Aorta (tissue), 5 donors: ENCODE measurements at regions of chr1 and their contacts with region 1.

Region 1: GRCh38 chr1:47738560-47739182 is 258.5 kb downstream of the TRABD2B start:
- DNase-seq: peak; percentile 64 to 88
- ATAC-seq: peak; percentile 90
- H3K4me3 ChIP-seq: no peak overlapping the region
- H3K27ac ChIP-seq: no peak overlapping the region
- H3K4me1 ChIP-seq: no peaks in the 10 kb centered on the region
- H3K27me3 ChIP-seq: no peaks in the 10 kb centered on the region

Region 2: DNA sequence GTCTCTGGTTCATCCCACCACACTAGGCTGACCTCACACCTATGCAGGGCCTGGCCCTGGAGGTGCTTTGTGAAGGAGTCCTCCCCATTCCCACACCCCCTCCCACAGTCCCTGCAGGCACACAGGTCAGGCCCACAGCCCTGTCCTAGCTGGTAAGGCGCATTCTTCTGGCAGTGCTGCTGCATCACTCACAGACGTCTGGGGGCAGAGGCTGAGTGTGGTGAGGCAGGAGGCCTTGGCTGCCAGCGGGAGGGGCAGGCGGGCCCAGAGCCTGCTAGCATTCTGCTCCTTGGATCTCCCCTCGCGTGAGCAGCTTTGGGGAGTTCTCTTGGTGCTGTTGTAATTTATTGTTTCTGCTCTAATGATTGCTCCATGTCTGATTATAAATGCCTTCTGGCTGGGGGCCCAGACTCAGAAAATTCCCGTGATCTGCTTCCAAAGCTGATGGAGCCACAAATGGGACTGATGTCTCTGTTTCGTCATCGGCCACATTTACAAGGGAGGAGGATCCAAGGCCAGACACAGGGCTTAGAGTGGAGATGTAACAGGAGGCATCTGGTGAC is 195.7 kb after region 1 on chr1:
- intact Hi-C with region 1: loop called in 1 of 2 experiments (anchors 5 kb)
- DNase-seq: peak; percentile 77 to 90
- ATAC-seq: peak; percentile 88
- H3K4me3 ChIP-seq: no peak overlapping the region
- H3K27ac ChIP-seq: no peak overlapping the region
- H3K4me1 ChIP-seq: no peaks in the 10 kb centered on the region
- H3K27me3 ChIP-seq: no peaks in the 10 kb centered on the region

Region 3: GRCh38 chr1:47997289-47998200 is 258.9 kb after region 1 on chr1 and contains the start of gene TRABD2B:
- intact Hi-C with region 1: loop called in 1 of 2 experiments (anchors 5 kb)
- DNase-seq: peak; percentile 86 to 95
- ATAC-seq: peak; percentile 90
- H3K4me3 ChIP-seq: peak within 1 kb of the TSS; percentile 80 to 92
- H3K27ac ChIP-seq: peak within 1 kb of the TSS in 1 of 2 donors; percentile 45
- H3K4me1 ChIP-seq: no peaks in the 10 kb centered on the region
- H3K27me3 ChIP-seq: no peaks in the 10 kb centered on the region
- total RNA-seq, gene TRABD2B: 10.6 to 13.3 TPM

Region 4: DNA sequence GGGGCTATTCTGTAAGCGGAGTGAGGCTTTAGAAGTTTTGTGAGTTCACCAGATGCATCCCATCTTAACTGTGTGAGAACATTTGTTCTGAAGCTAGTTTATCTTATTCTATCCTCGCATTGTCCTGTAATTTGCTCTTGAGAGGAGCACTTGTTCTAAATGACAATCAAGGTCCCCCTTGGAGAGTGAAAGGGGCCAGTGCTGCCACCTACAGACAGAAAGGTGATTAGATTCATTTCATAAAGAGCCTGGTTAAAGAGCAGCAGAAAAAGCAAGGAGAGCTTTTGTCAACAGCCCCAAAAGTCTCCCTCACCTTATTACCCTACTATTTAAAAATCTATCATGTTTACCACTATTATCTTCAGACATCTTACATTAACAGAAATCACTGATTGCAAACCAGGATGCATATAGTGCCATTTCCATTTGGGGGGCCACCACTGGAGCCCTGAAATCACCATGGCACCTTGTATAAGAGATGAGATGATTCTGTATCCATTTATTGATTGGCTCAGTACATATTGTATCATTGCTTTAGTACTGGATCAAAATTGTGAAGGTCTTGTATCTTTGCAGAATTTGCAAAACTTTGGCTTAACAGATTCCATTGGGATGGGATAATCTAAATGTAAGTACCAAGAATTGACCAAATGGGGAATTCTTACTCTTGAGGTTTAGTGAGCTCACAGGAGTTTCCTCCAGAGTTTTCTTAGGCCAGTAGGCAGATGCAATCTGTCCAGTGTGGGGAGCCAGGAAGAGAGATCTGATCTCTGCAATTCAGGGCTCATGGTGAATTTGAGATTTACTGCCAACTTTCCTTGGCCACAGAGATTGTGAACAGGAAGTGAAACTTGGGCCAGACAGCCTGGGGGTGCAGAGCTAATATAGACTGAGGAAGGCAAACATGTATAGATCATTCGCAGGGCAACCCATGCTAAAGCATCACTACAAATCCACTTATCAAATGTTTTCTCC is 322.8 kb after region 1 on chr1:
- intact Hi-C with region 1: loop called in 1 of 2 experiments (anchors 5 kb)
- DNase-seq: peak in 1 of 2 donors; percentile 78
- ATAC-seq: peak; percentile 65
- H3K4me3 ChIP-seq: no peak overlapping the region
- H3K27ac ChIP-seq: no peak overlapping the region
- H3K4me1 ChIP-seq: no peaks in the 10 kb centered on the region
- H3K27me3 ChIP-seq: no peaks in the 10 kb centered on the region

Region 5: GRCh38 chr1:48202030-48202752 is 463.5 kb after region 1 on chr1:
- intact Hi-C with region 1: loop called (anchors 5 to 10 kb)
- DNase-seq: peak; percentile 76 to 91
- ATAC-seq: peak; percentile 92
- H3K4me3 ChIP-seq: no peak overlapping the region
- H3K27ac ChIP-seq: no peak overlapping the region
- H3K4me1 ChIP-seq: no peaks in the 10 kb centered on the region
- H3K27me3 ChIP-seq: no peaks in the 10 kb centered on the region